Caco-2 (cell line): ENCODE measurements at regions of chr14 and their contacts with region 1.

Region 1: GRCh38 chr14:76677534-76678145 is 83.6 kb upstream of the VASH1 start:
- DNase-seq: no peak
- H3K4me3 ChIP-seq: no peak overlapping the region
- H3K4me3 Mint-ChIP-seq: no peak overlapping the region
- H3K27ac Mint-ChIP-seq: no peak overlapping the region
- H3K4me1 ChIP-seq: no peaks in the 10 kb centered on the region
- H3K4me1 Mint-ChIP-seq: no peaks in the 10 kb centered on the region
- H3K27me3 ChIP-seq: no peaks in the 10 kb centered on the region
- H3K27me3 Mint-ChIP-seq: peaks cover 12% of the 10 kb centered on the region
- CTCF ChIP-seq: no peak

Region 2: DNA sequence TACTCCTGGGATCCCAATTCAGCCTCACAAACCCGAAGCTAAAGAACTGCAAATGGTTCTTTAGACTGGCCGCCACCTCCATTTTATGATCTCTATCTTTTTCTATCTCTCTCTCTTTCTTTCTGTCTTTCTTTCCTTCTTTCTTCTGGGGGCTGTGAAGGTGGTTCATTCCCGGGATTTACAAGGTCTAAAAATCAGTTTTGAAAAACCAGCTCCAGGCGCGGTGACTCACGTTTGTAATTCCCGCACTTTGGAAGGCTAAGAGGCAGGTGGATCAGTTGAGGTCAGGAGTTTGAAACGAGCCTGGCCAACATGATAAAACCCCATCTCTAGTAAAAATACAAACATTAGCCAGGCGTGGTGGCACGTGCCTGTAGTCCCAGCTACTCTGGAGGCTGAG is 16.5 kb after region 1 on chr14:
- CTCF ChIA-PET with region 1: no interaction called
- POLR2A ChIA-PET with region 1: no interaction called
- intact Hi-C with region 1: loop called (anchors 1 kb)
- DNase-seq: no peak
- H3K4me3 ChIP-seq: no peak overlapping the region
- H3K4me3 Mint-ChIP-seq: no peak overlapping the region
- H3K27ac Mint-ChIP-seq: no peak overlapping the region
- H3K4me1 ChIP-seq: no peaks in the 10 kb centered on the region
- H3K4me1 Mint-ChIP-seq: no peaks in the 10 kb centered on the region
- H3K27me3 ChIP-seq: no peaks in the 10 kb centered on the region
- H3K27me3 Mint-ChIP-seq: peaks cover 8% of the 10 kb centered on the region
- CTCF ChIP-seq: no peak

Region 3: DNA sequence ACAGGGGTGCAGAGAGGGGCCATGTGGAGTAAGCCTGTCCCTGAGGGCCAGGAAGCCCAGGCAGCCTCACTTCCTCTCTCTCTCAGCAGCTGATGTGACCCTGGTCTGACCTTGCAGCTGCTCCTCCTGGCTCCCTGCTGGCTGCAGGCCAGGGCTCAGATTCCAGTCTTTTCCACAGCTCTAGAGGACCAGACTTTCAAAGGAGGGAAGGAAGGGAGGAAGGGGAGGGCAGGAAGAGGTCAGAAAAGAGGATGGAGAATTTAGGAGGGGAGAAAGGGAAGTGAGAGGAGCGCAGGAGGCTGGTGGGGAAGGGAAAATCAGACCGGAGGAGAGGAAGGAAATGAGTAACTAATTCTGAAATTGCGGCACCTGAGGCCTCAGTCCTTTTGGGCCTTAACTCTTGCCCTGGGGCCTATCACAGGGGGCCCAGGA is 42.8 kb after region 1 on chr14:
- CTCF ChIA-PET with region 1: no interaction called
- POLR2A ChIA-PET with region 1: no interaction called
- intact Hi-C with region 1: no loop called
- DNase-seq: no peak
- H3K4me3 ChIP-seq: no peak overlapping the region
- H3K4me3 Mint-ChIP-seq: no peak overlapping the region
- H3K27ac Mint-ChIP-seq: no peak overlapping the region
- H3K4me1 ChIP-seq: no peaks in the 10 kb centered on the region
- H3K4me1 Mint-ChIP-seq: no peaks in the 10 kb centered on the region
- H3K27me3 ChIP-seq: no peaks in the 10 kb centered on the region
- H3K27me3 Mint-ChIP-seq: peaks cover 8% of the 10 kb centered on the region
- CTCF ChIP-seq: no peak